Activated T-helper 1 cell treated with anti-CD3 and anti-CD28 coated beads, Interleukin-12 subunit alpha, Interleukin-12 subunit beta, Interleukin-2, Interleukin-4 antibody, amounts not matched to agents 30 ng/mL and 10 ng/mL and 1 ng/mL, durations not matched to agents 14 hours and 24 hours and 36 hours (primary cell): ENCODE measurements at regions of chr2 and their contacts with region 1.

Region 1: GRCh38 chr2:2613279-2614199 is 282.5 kb upstream of the MYT1L start:
- DNase-seq: peak; percentile 86
- H3K4me3 Mint-ChIP-seq: peak overlapping the region; percentile 80
- H3K27ac Mint-ChIP-seq: peak overlapping the region; percentile 81
- H3K4me1 Mint-ChIP-seq: peaks cover 5% of the 10 kb centered on the region
- H3K27me3 Mint-ChIP-seq: peaks cover 6% of the 10 kb centered on the region

Region 2: GRCh38 chr2:677056-677965 is 1936.2 kb before region 1 on chr2 and contains the start of gene TMEM18:
- intact Hi-C with region 1: loop called (anchors 2 kb)
- DNase-seq: peak; percentile 88
- H3K4me3 Mint-ChIP-seq: peak within 1 kb of the TSS; percentile 94
- H3K27ac Mint-ChIP-seq: peak within 1 kb of the TSS; percentile 97
- H3K4me1 Mint-ChIP-seq: peaks cover 42% of the 10 kb centered on the region
- H3K27me3 Mint-ChIP-seq: peaks cover 2% of the 10 kb centered on the region
- total RNA-seq, gene TMEM18: 23.3 and 24.9 TPM in 2 replicates

Region 3: DNA sequence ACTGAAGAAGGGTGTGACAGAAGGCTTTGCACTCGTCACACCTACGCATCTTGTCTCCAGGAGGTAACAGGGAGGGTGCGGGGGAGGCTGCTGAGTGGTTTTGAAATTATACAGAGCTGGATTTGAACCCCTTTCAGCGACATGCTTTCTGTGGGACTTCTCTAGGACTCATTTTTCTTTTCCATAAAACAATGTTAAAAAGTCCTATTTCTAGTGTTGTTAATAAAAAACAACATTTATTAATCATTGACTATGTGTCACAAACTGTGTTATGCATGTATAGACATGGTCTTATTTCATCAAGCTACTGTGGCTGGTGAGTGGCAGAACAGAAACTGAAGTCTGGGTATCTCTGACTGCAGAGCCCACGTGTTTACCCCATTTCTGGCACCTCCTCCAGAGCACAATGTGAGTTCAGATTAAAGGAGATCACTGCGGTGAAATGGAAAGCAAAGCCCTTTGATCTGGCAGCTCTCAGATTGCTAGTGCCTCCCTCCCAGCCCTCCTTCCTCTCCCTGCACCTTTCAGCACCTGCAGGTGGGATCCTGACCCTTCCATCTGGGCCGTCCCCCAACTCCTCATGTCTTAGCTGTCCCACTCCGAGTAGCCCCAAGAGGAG is 33.0 kb after region 1 on chr2:
- intact Hi-C with region 1: loop called (anchors 1 kb)
- DNase-seq: peak; percentile 26
- H3K4me3 Mint-ChIP-seq: peak overlapping the region; percentile 30
- H3K27ac Mint-ChIP-seq: peak overlapping the region; percentile 11
- H3K4me1 Mint-ChIP-seq: peaks cover 25% of the 10 kb centered on the region
- H3K27me3 Mint-ChIP-seq: peaks cover 2% of the 10 kb centered on the region

Region 4: DNA sequence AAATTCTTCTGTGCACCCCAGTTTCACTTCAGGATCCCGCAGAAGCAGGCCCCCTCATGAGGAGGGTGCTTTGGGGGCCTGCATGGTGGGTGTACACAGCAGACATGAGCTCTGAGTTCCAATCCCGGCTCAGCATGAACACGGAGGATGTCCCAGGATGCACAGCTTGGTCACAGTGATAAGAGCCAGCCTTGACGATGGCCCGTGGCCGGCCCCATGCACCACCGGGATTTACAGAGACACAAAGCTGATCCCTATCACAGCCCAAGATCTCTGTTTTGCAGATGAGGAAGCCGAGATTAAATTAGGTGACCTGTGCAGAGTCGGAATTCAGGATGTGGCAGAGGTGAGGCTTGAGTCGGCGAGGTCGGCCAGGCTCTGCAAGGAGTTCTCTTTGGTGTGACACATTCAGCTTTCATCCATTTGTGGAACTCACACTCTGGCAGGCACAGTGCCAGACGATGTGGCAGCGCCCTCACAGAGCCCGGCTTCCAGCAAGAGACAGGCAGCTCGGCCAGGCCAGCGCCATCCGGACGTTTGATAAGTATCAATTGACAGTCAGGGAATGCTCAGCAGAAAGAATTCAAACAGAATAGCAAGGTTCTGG is 173.9 kb after region 1 on chr2:
- intact Hi-C with region 1: no loop called
- DNase-seq: no peak
- H3K4me3 Mint-ChIP-seq: no peak overlapping the region
- H3K27ac Mint-ChIP-seq: no peak overlapping the region
- H3K4me1 Mint-ChIP-seq: no peaks in the 10 kb centered on the region
- H3K27me3 Mint-ChIP-seq: no peaks in the 10 kb centered on the region

Region 5: DNA sequence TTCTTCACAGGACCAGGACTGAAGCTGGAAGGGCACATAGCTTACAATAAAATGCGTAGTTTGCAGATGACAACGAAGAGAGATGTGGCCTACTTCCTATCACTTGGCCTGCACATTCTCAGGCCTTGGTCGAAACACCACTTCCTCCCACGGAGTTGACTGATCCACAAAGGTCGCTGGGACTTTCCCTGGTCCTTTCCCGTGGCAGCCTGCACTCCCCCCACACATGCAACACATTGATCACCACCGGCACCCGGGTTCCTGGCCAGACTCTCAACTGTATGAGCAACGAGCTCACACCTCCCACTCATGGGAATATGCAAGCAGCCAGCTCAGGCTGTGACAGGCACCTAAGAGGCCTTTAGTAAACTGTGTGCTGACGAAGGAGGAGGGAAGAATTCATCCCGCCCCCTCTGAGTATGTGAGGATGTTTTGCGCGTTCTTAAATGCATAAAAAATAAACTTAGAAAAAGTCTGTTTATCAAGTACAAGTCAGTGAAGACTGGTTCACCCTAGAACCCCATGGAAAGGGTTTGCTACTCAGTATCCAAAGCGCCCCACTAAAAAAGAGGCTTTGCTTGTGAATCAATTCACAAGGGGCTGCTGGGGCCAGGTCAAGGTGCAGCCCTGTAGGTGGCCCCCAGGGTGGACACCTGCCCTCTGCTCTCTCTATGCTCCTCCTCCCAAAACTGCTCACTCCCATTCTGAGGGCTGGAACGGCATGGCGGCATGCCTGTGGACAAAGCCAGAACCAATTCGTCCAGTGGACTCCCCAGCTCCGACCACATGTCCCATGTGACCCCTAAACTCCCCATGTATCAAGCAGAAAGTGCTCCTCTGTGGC is 609.8 kb after region 1 on chr2:
- intact Hi-C with region 1: loop called (anchors 5 kb)
- DNase-seq: peak; percentile 75
- H3K4me3 Mint-ChIP-seq: peak overlapping the region; percentile 40
- H3K27ac Mint-ChIP-seq: peak overlapping the region; percentile 100
- H3K4me1 Mint-ChIP-seq: peaks cover 61% of the 10 kb centered on the region
- H3K27me3 Mint-ChIP-seq: no peaks in the 10 kb centered on the region

Region 6: GRCh38 chr2:3575534-3576262 is 962.2 kb after region 1 on chr2:
- intact Hi-C with region 1: loop called (anchors 1 kb)
- DNase-seq: peak; percentile 17
- H3K4me3 Mint-ChIP-seq: peak overlapping the region; percentile 99
- H3K27ac Mint-ChIP-seq: peak overlapping the region; percentile 91
- H3K4me1 Mint-ChIP-seq: peaks cover 54% of the 10 kb centered on the region
- H3K27me3 Mint-ChIP-seq: peaks cover 1% of the 10 kb centered on the region